GM10248 (cell line): ENCODE measurements at regions of chr10 and their contacts with region 1.

Region 1: GRCh38 chr10:98467506-98468346 is 21.0 kb upstream of the HPS1 start:
- DNase-seq: peak; percentile 87
- CTCF ChIP-seq: peak; percentile 89

Region 2: DNA sequence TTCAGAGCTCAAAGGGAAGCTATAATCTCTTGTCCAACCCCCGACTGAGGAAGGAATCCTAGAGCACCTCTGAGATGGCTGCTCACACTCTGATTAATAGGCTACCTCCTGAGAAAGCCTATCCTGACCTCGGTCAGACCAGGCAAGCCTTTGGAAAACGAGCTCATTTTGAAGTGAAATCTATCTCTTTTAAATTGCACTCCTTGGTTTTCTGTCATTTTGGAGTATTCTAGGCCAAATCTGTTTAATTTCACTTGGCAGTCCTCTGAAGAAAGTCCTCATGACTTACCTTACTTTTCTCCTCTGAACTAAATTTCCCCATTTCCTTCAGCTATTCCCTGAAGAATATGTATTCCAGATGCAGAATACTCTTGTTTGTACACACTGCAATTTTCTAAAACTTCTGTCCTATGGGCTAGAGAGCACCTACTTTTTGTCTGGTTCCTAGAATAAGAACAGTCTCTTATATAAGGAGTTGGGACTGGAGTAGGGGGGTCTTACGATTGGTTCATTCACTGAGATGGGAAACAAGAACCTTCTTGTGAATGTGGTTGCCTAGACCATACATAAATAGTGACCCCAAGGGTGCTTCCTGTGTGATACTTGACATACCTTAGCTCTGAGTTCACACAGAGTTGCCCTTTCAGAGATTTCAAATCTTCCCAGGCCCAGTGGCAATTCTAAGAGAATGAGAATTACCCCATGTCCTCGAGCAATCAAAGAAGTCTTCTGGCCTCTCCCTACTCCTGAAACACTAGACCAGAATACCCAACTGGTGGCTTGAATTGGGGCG is 10.9 kb after region 1 on chr10:
- CTCF ChIA-PET with region 1: interaction called, 68 read pairs
- POLR2A ChIA-PET with region 1: no interaction called
- DNase-seq: no peak
- CTCF ChIP-seq: no peak

Region 3: DNA sequence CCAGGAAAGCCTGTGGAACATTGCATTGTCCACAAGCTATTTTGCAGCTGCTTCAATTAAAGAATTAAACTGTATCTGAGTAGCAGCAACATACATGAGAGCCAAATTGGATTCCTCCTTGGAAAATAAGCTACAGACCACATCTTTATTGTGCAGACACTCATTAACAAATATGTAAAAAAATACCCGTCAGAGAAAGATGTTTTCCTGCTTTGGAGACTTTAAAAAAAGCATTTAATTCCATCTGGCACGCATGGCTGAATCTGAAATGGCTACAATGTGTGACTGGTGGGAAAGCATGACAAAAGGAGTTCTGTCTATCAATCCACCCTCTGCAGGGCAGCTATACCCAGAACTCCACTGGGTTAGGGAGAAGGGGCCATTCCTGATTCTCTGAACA is 52.1 kb after region 1 on chr10:
- CTCF ChIA-PET with region 1: interaction called, 10 read pairs
- POLR2A ChIA-PET with region 1: no interaction called
- DNase-seq: no peak
- CTCF ChIP-seq: no peak

Region 4: GRCh38 chr10:98608411-98608810 is 140.7 kb after region 1 on chr10:
- CTCF ChIA-PET with region 1: no interaction called
- POLR2A ChIA-PET with region 1: no interaction called
- DNase-seq: no peak
- CTCF ChIP-seq: no peak

Region 5: GRCh38 chr10:99234041-99234790 is 766.5 kb after region 1 on chr10:
- CTCF ChIA-PET with region 1: interaction called, 12 read pairs
- POLR2A ChIA-PET with region 1: no interaction called
- DNase-seq: peak; percentile 89
- CTCF ChIP-seq: no peak

Region 6: DNA sequence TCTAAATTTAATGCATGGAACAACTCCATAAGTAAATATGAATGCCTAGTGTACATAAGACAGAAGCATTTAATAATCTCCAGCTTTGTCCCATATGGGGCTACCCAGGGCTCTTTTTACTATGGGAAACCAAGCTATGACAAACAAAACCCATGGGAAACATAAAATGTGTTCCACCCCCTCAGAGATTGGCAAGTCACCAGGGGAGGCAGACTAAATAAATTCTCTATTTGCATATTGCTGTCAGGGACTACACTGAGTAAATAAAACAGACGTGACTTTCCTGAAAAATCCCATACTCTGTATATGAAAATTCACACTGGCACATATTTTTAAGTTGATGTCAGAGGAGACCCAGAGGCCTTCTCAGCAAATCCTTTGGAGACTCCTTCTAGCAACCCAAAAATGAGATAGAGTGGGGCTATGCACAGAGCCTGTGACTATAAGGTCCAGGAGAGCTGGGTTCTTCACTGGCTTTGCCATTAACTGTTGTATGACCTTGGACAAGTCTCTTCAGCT is 811.9 kb after region 1 on chr10:
- CTCF ChIA-PET with region 1: interaction called, 17 read pairs
- POLR2A ChIA-PET with region 1: no interaction called
- DNase-seq: no peak
- CTCF ChIP-seq: no peak